ENCODE measurements at regions of chr4 and their contacts with region 1.

Region 1: GRCh38 chr4:53365486-53366300 is at the start of gene SCFD2:
- DNase-seq: peak; percentile 86 to 97 (median 94)
- ATAC-seq: peak; percentile 99
- H3K4me3 ChIP-seq: peak within 1 kb of the TSS; percentile 72
- H3K4me3 Mint-ChIP-seq: peak within 1 kb of the TSS; percentile 92 to 99 (median 96)
- H3K27ac ChIP-seq: peak within 1 kb of the TSS; percentile 85
- H3K27ac Mint-ChIP-seq: peak within 1 kb of the TSS; percentile 95 to 99 (median 96)
- H3K4me1 ChIP-seq: peaks cover 7 to 23% of the 10 kb centered on the region in 2 donors
- H3K4me1 Mint-ChIP-seq: peaks cover 32 to 64% (median 50%) of the 10 kb centered on the region in 7 donors
- H3K27me3 ChIP-seq: no peaks in the 10 kb centered on the region
- H3K27me3 Mint-ChIP-seq: peaks cover 0 to 20% (median 3%) of the 10 kb centered on the region in 5 donors
- total RNA-seq, gene SCFD2: 13.4 to 32.8 (median 28.0) TPM

Region 2: GRCh38 chr4:52721968-52722815 is 643.5 kb before region 1 on chr4:
- CTCF ChIA-PET with region 1: no interaction called
- POLR2A ChIA-PET with region 1: no interaction called
- intact Hi-C with region 1: loop called in 1 of 2 experiments (anchors 1 kb)
- DNase-seq: peak; percentile 62 to 87 (median 81)
- ATAC-seq: peak; percentile 99
- H3K4me3 ChIP-seq: peak overlapping the region; percentile 83
- H3K4me3 Mint-ChIP-seq: peak overlapping the region; percentile 55 to 90 (median 79)
- H3K27ac ChIP-seq: peak overlapping the region; percentile 86
- H3K27ac Mint-ChIP-seq: peak overlapping the region; percentile 54 to 95 (median 86)
- H3K4me1 ChIP-seq: no peaks in the 10 kb centered on the region
- H3K4me1 Mint-ChIP-seq: peaks cover 5 to 14% (median 11%) of the 10 kb centered on the region in 7 donors
- H3K27me3 ChIP-seq: no peaks in the 10 kb centered on the region
- H3K27me3 Mint-ChIP-seq: peaks cover 0 to 11% (median 0%) of the 10 kb centered on the region in 5 donors

Region 3: GRCh38 chr4:53377319-53378170 is 11.9 kb after region 1 on chr4 and contains the start of gene FIP1L1:
- CTCF ChIA-PET with region 1: no interaction called
- POLR2A ChIA-PET with region 1: interaction called, 35 read pairs
- intact Hi-C with region 1: loop called (anchors 1 kb)
- DNase-seq: peak; percentile 92 to 97 (median 96)
- ATAC-seq: peak; percentile 97
- H3K4me3 ChIP-seq: peak within 1 kb of the TSS; percentile 85
- H3K4me3 Mint-ChIP-seq: peak within 1 kb of the TSS; percentile 94 to 100 (median 99)
- H3K27ac ChIP-seq: peak within 1 kb of the TSS; percentile 89
- H3K27ac Mint-ChIP-seq: peak within 1 kb of the TSS; percentile 97 to 100 (median 99)
- H3K4me1 ChIP-seq: peaks cover 17 to 21% of the 10 kb centered on the region in 2 donors
- H3K4me1 Mint-ChIP-seq: peaks cover 20 to 53% (median 37%) of the 10 kb centered on the region in 7 donors
- H3K27me3 ChIP-seq: no peaks in the 10 kb centered on the region
- H3K27me3 Mint-ChIP-seq: peaks cover 0 to 15% (median 4%) of the 10 kb centered on the region in 5 donors
- total RNA-seq, gene FIP1L1: 57.1 to 91.0 (median 78.7) TPM

Measured in naive thymus-derived CD4-positive, alpha-beta T cell (primary cell).